Activated CD4-positive, alpha-beta T cell treated with anti-CD3 and anti-CD28 coated beads, Interleukin-2, amount 10 ng/mL, durations not matched to agents 24 days and 14 days (primary cell): ENCODE measurements at regions of chr9 and their contacts with region 1.

Region 1: DNA sequence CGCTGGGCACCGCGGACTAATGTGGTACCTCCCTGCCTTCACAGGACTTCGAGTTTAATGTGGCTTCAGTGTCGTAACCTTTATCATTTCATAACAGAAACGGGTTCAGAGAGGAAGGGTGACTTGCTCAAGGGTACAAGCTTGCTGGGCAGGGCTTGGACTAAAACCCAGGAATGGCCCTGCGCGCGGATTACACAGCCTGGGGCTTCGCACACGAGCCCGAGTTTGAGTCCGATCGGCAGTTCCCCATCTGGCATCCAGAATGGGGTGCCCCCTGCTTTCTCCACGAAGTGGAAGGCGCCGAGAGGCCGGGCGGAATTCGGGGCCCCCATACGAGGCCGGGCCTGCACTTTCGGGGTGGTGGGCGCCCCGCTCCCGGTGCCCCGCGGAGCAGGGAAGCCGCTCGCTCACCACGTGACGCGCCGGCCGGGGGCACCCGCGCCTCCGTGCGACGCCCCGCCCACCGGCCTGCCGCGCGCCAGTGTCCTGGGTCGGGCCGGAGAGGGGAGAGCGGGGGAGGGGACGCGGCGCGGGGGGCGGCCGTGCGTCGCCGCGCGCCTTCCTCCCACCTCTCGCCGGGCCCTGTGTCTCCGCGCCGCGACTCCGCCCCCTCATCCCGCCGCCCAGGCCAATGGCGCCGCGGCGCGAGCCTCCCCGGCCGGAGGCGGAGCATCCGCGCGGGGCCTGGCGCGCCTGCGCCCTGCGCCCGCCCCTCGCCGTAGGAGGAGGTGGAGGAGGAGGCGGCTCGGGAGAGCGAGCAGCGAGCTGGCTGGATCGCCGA is at the start of gene SET:
- DNase-seq: peak; percentile 98
- H3K4me3 Mint-ChIP-seq: peak within 1 kb of the TSS; percentile 78
- H3K27ac Mint-ChIP-seq: peak within 1 kb of the TSS; percentile 93
- H3K4me1 Mint-ChIP-seq: peaks cover 57% of the 10 kb centered on the region
- H3K27me3 Mint-ChIP-seq: no peaks in the 10 kb centered on the region
- total RNA-seq, gene SET: 831 and 846 TPM in 2 replicates

Region 2: GRCh38 chr9:128656416-128657343 is 32.0 kb before region 1 on chr9 and contains the start of gene DYNC2I2:
- intact Hi-C with region 1: loop called (anchors 1 kb)
- DNase-seq: peak; percentile 99
- H3K4me3 Mint-ChIP-seq: peak within 1 kb of the TSS; percentile 90
- H3K27ac Mint-ChIP-seq: peak within 1 kb of the TSS; percentile 100
- H3K4me1 Mint-ChIP-seq: peaks cover 10% of the 10 kb centered on the region
- H3K27me3 Mint-ChIP-seq: no peaks in the 10 kb centered on the region
- total RNA-seq, gene DYNC2I2: 47.4 and 47.7 TPM in 2 replicates

Region 3: DNA sequence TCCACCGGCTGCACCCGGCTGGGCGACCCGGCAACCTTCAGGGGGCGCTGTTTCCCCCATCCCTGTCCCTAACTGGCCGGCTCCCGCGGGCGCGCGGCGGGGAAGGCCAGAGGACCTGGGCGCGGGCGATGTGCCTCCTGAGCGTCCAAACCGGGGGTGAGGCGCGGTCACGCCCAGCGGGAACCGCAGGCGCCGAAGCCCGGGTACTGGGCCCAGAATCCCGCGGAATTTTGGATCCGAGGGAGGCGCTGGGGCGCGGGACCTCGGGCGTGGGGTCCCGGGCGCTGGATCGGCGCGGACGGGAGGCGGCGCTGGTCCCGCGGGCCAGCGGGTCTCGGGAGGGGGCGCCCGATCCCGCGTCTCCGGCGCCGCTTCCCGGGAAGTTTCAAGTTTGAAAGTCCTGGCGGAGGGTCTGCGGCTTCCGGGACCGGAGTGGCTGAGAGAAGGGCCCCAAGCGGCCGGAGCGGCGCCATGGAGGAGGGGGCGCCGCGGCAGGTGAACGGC is 13.8 kb after region 1 on chr9 and contains the start of gene PKN3:
- intact Hi-C with region 1: loop called (anchors 2 kb)
- DNase-seq: peak; percentile 97
- H3K4me3 Mint-ChIP-seq: peak within 1 kb of the TSS; percentile 84
- H3K27ac Mint-ChIP-seq: peak within 1 kb of the TSS; percentile 80
- H3K4me1 Mint-ChIP-seq: peaks cover 8% of the 10 kb centered on the region
- H3K27me3 Mint-ChIP-seq: no peaks in the 10 kb centered on the region
- total RNA-seq, gene PKN3: 22.9 and 24.3 TPM in 2 replicates

Region 4: DNA sequence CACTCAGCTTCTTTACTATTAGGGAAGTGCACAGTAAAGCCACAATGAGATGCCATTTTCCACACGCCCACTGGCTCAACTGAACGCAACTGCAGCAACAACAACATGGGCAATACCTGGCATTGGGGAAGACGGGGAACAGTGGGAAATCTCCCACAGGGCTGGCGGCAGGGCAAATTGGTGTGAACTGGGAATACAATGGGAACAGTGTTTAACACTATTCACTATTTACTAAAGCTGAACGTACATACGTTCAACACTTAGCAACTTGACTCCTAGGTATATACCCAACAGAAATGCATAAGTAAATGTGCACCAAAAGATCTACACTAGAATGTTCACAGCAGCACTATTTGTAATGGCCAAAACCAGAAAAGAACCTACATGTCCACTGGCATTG is 68.9 kb after region 1 on chr9:
- intact Hi-C with region 1: no loop called
- DNase-seq: no peak
- H3K4me3 Mint-ChIP-seq: no peak overlapping the region
- H3K27ac Mint-ChIP-seq: no peak overlapping the region
- H3K4me1 Mint-ChIP-seq: no peaks in the 10 kb centered on the region
- H3K27me3 Mint-ChIP-seq: no peaks in the 10 kb centered on the region

Region 5: GRCh38 chr9:128771745-128772519 is 83.2 kb after region 1 on chr9 and contains the start of gene ZER1:
- intact Hi-C with region 1: loop called (anchors 5 kb)
- DNase-seq: peak; percentile 99
- H3K4me3 Mint-ChIP-seq: peak within 1 kb of the TSS; percentile 87
- H3K27ac Mint-ChIP-seq: peak within 1 kb of the TSS; percentile 90
- H3K4me1 Mint-ChIP-seq: peaks cover 15% of the 10 kb centered on the region
- H3K27me3 Mint-ChIP-seq: no peaks in the 10 kb centered on the region
- total RNA-seq, gene ZER1: 12.3 and 14.4 TPM in 2 replicates

Region 6: GRCh38 chr9:128947422-128948301 is 259.0 kb after region 1 on chr9 and contains the starts of genes DOLK and NUP188:
- intact Hi-C with region 1: loop called (anchors 5 kb)
- DNase-seq: peak; percentile 100
- H3K4me3 Mint-ChIP-seq: peak within 1 kb of the TSS; percentile 92
- H3K27ac Mint-ChIP-seq: peak within 1 kb of the TSS; percentile 99
- H3K4me1 Mint-ChIP-seq: peaks cover 33% of the 10 kb centered on the region
- H3K27me3 Mint-ChIP-seq: no peaks in the 10 kb centered on the region
- total RNA-seq, gene DOLK: 15.2 and 15.9 TPM in 2 replicates
- total RNA-seq, gene NUP188: 162 and 176 TPM in 2 replicates